Activated T-helper 2 cell treated with anti-CD3 and anti-CD28 coated beads, Interferon-gamma antibody, Interleukin-2, Interleukin-4, amounts not matched to agents 10 μg/mL and 5 μg/mL and 100 μg/mL, durations not matched to agents 14 hours and 24 hours and 36 hours (primary cell): ENCODE measurements at regions of chr21 and their contacts with region 1.

Region 1: GRCh38 chr21:14545906-14546480 is at the start of gene SAMSN1:
- DNase-seq: peak; percentile 76
- H3K4me3 Mint-ChIP-seq: peak within 1 kb of the TSS; percentile 93
- H3K27ac Mint-ChIP-seq: peak within 1 kb of the TSS; percentile 78
- H3K4me1 Mint-ChIP-seq: peaks cover 56% of the 10 kb centered on the region
- H3K27me3 Mint-ChIP-seq: no peaks in the 10 kb centered on the region
- total RNA-seq, gene SAMSN1: 73.0 and 79.0 TPM in 2 replicates

Region 2: DNA sequence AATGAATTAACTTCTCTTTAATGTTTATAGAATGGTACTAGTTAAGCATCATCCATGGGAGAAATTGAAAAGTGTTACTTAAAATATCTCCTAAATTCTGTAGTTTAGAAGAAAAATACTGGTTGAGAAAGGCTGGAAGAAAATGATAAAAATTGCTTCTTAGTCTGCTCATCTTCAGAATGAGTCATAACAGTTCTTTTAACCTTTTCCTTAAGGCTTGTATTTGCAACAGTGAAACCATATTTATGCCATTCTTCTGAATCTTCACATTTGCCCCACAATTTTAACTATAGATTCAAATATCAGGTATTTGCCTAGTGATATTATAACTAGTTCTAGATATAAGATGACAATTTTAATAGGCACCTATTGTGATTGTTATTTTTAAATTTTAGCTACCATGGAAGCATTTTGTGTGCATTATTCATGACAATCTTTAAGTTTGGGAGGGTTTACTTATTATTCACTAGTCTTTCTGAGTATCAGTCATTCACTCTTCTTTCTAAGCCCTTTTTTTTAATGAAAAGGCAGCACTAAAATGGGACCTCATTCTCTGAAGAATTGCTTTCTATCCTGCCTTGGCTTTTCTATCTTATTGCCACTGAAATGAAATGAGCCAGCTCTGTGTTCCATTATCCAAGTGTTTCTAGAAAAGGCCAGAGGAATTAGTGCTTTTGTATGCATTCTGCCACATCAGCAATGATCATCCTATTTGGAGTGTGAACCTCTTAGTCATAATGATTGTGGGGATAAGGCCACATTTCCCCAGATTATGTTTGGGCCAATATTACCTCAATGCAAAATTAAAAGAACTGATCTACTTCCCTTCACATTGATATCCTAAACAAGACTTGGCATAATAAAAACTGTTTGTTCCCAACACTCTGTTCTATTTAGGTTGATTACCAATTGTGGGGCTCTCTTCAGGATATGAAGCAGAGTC is 58.2 kb before region 1 on chr21:
- intact Hi-C with region 1: loop called (anchors 2 kb)
- DNase-seq: no peak
- H3K4me3 Mint-ChIP-seq: peak overlapping the region; percentile 2
- H3K27ac Mint-ChIP-seq: peak overlapping the region; percentile 88
- H3K4me1 Mint-ChIP-seq: peaks cover 69% of the 10 kb centered on the region
- H3K27me3 Mint-ChIP-seq: no peaks in the 10 kb centered on the region

Region 3: GRCh38 chr21:14533504-14534428 is 12.2 kb before region 1 on chr21:
- intact Hi-C with region 1: loop called (anchors 1 kb)
- DNase-seq: no peak
- H3K4me3 Mint-ChIP-seq: peak overlapping the region; percentile 86
- H3K27ac Mint-ChIP-seq: peak overlapping the region; percentile 99
- H3K4me1 Mint-ChIP-seq: peaks cover 72% of the 10 kb centered on the region
- H3K27me3 Mint-ChIP-seq: no peaks in the 10 kb centered on the region

Region 4: DNA sequence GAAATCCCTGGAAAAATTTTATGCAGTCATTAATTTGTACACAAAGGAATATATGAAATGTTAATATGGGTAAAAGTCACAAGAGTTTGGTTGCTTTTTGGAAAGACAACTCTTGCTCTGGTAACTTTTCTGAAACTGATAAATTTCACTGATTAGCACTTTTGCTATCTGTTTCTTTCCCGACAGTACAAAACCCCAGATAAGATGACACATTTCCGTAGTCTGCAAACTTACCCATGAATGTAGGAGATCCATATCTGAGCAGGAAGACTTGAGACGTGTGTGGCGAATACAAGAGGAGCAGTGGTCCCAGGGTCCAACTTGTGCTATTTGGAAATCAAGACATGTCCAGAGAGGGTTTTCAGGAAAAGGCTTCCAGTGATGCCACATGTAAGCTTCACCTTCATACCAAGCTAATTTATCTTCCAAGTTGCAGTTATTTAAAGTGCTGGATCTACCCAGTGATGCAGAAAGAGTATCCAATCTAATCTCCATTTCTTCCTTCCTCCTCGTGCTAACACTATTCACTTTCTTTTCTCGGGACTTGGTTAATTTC is 36.0 kb after region 1 on chr21:
- intact Hi-C with region 1: loop called (anchors 1 kb)
- DNase-seq: peak; percentile 40
- H3K4me3 Mint-ChIP-seq: peak overlapping the region; percentile 35
- H3K27ac Mint-ChIP-seq: peak overlapping the region; percentile 70
- H3K4me1 Mint-ChIP-seq: peaks cover 50% of the 10 kb centered on the region
- H3K27me3 Mint-ChIP-seq: no peaks in the 10 kb centered on the region

Region 5: GRCh38 chr21:14620152-14620551 is 74.2 kb after region 1 on chr21:
- intact Hi-C with region 1: loop called (anchors 2 kb)
- DNase-seq: no peak
- H3K4me3 Mint-ChIP-seq: no peak overlapping the region
- H3K27ac Mint-ChIP-seq: peak overlapping the region; percentile 72
- H3K4me1 Mint-ChIP-seq: peaks cover 22% of the 10 kb centered on the region
- H3K27me3 Mint-ChIP-seq: no peaks in the 10 kb centered on the region

Region 6: DNA sequence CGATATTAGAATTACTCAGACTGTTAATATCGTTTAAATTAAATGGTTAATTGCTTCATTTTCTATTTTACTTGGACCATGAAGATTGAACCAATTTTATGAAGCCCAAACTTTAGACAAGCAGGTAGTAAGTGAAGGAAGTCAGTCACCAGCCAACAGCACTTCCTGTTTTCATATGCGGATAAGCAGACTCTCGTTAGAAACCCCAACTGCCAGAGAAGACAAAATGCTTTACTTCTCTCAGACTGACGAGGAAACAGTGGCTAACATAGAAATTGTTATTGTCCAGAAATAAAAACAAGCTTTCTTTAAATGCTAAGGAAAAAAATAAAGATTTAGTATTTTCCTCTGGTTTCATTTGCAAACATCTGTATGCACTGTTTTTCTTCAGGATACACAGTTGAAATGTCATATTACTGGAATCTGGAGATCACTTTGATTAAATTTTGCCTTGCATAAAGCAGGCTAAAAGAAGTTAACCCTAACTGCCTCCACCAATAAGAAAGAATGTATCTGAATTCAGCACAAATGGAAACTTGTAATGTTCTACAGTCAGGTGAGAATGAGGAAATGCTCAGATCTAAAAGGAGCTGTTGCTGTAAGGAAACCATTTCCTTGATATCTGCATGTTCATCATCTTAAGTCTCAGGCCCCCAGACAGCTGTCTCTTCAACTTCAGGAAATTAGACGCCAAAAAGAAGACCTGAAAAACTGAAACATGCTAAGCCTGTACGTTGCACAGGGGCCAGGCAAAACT is 130.0 kb after region 1 on chr21:
- intact Hi-C with region 1: loop called (anchors 5 kb)
- DNase-seq: no peak
- H3K4me3 Mint-ChIP-seq: peak overlapping the region; percentile 52
- H3K27ac Mint-ChIP-seq: peak overlapping the region; percentile 97
- H3K4me1 Mint-ChIP-seq: peaks cover 47% of the 10 kb centered on the region
- H3K27me3 Mint-ChIP-seq: no peaks in the 10 kb centered on the region